ENCODE measurements at regions of chr20 and their contacts with region 1.

Region 1: DNA sequence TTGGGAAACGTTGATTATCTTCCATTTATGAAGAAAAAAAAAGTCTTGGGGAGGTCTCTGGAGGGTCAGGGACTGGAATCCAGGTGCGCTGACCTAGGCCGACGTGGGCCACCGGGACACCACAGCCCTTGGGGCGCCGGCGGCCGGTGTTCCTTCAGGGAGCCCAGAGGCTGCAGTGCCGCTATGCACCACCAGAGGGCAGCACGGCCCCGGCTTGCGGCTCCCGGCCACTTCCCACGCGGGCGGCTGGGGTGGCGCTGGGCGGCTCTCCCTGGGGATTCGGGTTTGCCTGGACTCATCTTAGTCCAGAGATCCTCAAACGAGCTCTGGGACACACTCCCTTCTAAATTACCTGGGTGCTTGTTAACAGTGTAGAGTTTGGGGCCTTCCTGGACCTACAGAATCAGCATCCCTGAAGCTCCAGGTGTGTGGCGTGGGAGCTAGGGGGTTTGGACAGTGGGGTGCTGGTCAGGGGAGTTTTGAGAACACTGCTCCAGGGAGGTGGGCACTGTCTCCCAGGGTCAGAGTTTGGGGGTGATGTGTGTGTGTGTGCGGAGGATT is 23.0 kb upstream of the GTSF1L start:
- DNase-seq: peak; percentile 89
- ATAC-seq: peak; percentile 88 to 91
- H3K4me3 ChIP-seq: no peak overlapping the region
- H3K27ac ChIP-seq: no peak overlapping the region
- H3K4me1 ChIP-seq: peaks cover 16% of the 10 kb centered on the region
- H3K27me3 ChIP-seq: peaks cover 23% of the 10 kb centered on the region
- CTCF ChIP-seq: peak; percentile 100

Region 2: DNA sequence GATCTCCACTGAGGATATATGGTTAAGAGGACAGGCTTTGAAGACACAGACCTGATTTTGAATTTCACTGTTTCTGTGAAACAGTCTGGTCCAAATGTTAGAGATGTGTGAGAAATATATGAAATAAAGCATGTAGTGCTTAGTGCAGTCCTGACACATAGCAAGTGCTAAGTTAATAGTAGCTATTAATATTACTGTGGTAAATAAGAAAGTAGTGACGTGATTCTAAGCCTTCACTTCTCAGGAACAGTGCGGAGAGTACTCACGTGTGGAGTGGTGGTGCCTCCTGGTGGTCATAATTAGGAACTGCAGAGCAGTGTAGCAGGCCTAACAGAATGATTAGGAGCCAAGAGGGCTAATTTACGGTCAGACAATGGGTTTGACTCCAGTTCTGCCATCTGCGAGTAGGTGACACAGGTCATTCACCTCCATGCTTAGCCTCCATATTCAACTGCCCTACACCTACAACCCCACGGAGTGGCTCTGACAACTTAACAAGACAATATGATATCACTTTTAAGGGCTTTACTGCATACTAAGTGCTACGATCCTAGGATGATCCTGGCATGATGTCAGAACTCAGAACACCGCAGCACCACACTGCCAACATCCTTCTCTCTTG is 330.9 kb after region 1 on chr20:
- intact Hi-C with region 1: loop called (anchors 10 kb)
- DNase-seq: no peak
- ATAC-seq: peak; percentile 93 to 94
- H3K4me3 ChIP-seq: no peak overlapping the region
- H3K27ac ChIP-seq: no peak overlapping the region
- H3K4me1 ChIP-seq: peaks cover 6% of the 10 kb centered on the region
- H3K27me3 ChIP-seq: no peaks in the 10 kb centered on the region
- CTCF ChIP-seq: peak; percentile 99